ENCODE measurements at regions of chr11 and their contacts with region 1.

Region 1: GRCh38 chr11:131867457-131868257 is 497.2 kb downstream of the NTM start:
- DNase-seq: peak; percentile 81
- H3K4me3 ChIP-seq: no peak overlapping the region
- H3K27ac ChIP-seq: no peak overlapping the region
- H3K27me3 ChIP-seq: no peaks in the 10 kb centered on the region
- CTCF ChIP-seq: peak; percentile 97

Region 2: GRCh38 chr11:131688051-131688698 is 179.5 kb before region 1 on chr11:
- CTCF ChIA-PET with region 1: interaction called, 40 read pairs
- POLR2A ChIA-PET with region 1: no interaction called
- DNase-seq: no peak
- H3K4me3 ChIP-seq: peak overlapping the region; percentile 46
- H3K27ac ChIP-seq: no peak overlapping the region
- H3K27me3 ChIP-seq: peaks cover 11% of the 10 kb centered on the region
- CTCF ChIP-seq: peak; percentile 89

Region 3: DNA sequence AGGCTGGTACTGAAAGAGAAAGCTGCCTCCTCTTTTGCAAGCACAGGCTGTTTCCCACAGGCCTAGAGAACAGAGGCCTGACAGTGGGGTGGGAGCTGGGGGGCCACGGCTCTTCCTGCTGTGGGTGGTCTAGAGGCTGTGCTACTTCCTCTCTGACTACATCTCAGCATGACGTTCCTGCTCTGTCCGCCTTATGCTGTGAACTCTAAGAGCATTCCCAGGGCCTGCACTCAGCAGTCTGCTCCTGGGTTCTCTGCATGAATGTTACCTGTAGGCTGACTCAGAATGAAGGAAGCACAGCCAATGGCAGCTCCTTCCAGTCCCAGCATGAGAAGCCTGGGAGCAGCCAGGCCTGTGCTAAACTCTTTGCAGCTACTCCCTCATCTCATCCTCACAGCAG is 37.1 kb after region 1 on chr11:
- CTCF ChIA-PET with region 1: interaction called, 88 read pairs
- POLR2A ChIA-PET with region 1: no interaction called
- DNase-seq: no peak
- H3K4me3 ChIP-seq: no peak overlapping the region
- H3K27ac ChIP-seq: no peak overlapping the region
- H3K27me3 ChIP-seq: no peaks in the 10 kb centered on the region
- CTCF ChIP-seq: no peak

Region 4: GRCh38 chr11:132114185-132114584 is 246.5 kb after region 1 on chr11:
- CTCF ChIA-PET with region 1: interaction called, 16 read pairs
- POLR2A ChIA-PET with region 1: no interaction called
- DNase-seq: no peak
- H3K4me3 ChIP-seq: no peak overlapping the region
- H3K27ac ChIP-seq: no peak overlapping the region
- H3K27me3 ChIP-seq: no peaks in the 10 kb centered on the region
- CTCF ChIP-seq: peak; percentile 37; the same call in 1 of the 2 replicates

Region 5: GRCh38 chr11:132312701-132313111 is 445.0 kb after region 1 on chr11:
- CTCF ChIA-PET with region 1: interaction called, 16 read pairs
- POLR2A ChIA-PET with region 1: no interaction called
- DNase-seq: no peak
- H3K4me3 ChIP-seq: no peak overlapping the region
- H3K27ac ChIP-seq: no peak overlapping the region
- H3K27me3 ChIP-seq: no peaks in the 10 kb centered on the region
- CTCF ChIP-seq: peak; percentile 69

Region 6: GRCh38 chr11:133064152-133064877 is 1196.7 kb after region 1 on chr11:
- CTCF ChIA-PET with region 1: interaction called, 15 read pairs
- POLR2A ChIA-PET with region 1: no interaction called
- DNase-seq: peak; percentile 44
- H3K4me3 ChIP-seq: peak overlapping the region; percentile 67
- H3K27ac ChIP-seq: peak overlapping the region; percentile 31
- H3K27me3 ChIP-seq: peaks cover 3% of the 10 kb centered on the region
- CTCF ChIP-seq: peak; percentile 79

Measured in AG04450 (cell line).